Activated CD4-positive, alpha-beta T cell treated with anti-CD3 and anti-CD28 coated beads, Interleukin-2, amount 10 ng/mL, durations not matched to agents 24 days and 14 days (primary cell): ENCODE measurements at regions of chr2 and their contacts with region 1.

Region 1: GRCh38 chr2:30447149-30448045 is at the start of gene LCLAT1:
- DNase-seq: peak; percentile 97
- H3K4me3 Mint-ChIP-seq: peak within 1 kb of the TSS; percentile 85
- H3K27ac Mint-ChIP-seq: peak within 1 kb of the TSS; percentile 97
- H3K4me1 Mint-ChIP-seq: peaks cover 26% of the 10 kb centered on the region
- H3K27me3 Mint-ChIP-seq: no peaks in the 10 kb centered on the region
- total RNA-seq, gene LCLAT1: 31.4 and 34.7 TPM in 2 replicates

Region 2: GRCh38 chr2:30266051-30266621 is 181.3 kb before region 1 on chr2:
- intact Hi-C with region 1: loop called (anchors 1 kb)
- DNase-seq: peak; percentile 86
- H3K4me3 Mint-ChIP-seq: peak overlapping the region; percentile 90
- H3K27ac Mint-ChIP-seq: peak overlapping the region; percentile 99
- H3K4me1 Mint-ChIP-seq: peaks cover 70% of the 10 kb centered on the region
- H3K27me3 Mint-ChIP-seq: no peaks in the 10 kb centered on the region

Region 3: GRCh38 chr2:30398084-30398873 is 49.1 kb before region 1 on chr2:
- intact Hi-C with region 1: no loop called
- DNase-seq: no peak
- H3K4me3 Mint-ChIP-seq: no peak overlapping the region
- H3K27ac Mint-ChIP-seq: no peak overlapping the region
- H3K4me1 Mint-ChIP-seq: no peaks in the 10 kb centered on the region
- H3K27me3 Mint-ChIP-seq: peaks cover 3% of the 10 kb centered on the region

Region 4: GRCh38 chr2:30410217-30410616 is 37.2 kb before region 1 on chr2:
- intact Hi-C with region 1: loop called (anchors 5 kb)
- DNase-seq: peak; percentile 69
- H3K4me3 Mint-ChIP-seq: peak overlapping the region; percentile 0
- H3K27ac Mint-ChIP-seq: peak overlapping the region; percentile 78
- H3K4me1 Mint-ChIP-seq: peaks cover 43% of the 10 kb centered on the region
- H3K27me3 Mint-ChIP-seq: no peaks in the 10 kb centered on the region

Region 5: GRCh38 chr2:30428827-30429461 is 18.5 kb before region 1 on chr2:
- intact Hi-C with region 1: loop called (anchors 1 kb)
- DNase-seq: no peak
- H3K4me3 Mint-ChIP-seq: peak overlapping the region; percentile 39
- H3K27ac Mint-ChIP-seq: peak overlapping the region; percentile 78
- H3K4me1 Mint-ChIP-seq: peaks cover 25% of the 10 kb centered on the region
- H3K27me3 Mint-ChIP-seq: no peaks in the 10 kb centered on the region

Region 6: GRCh38 chr2:30781961-30782533 is 334.6 kb after region 1 on chr2:
- intact Hi-C with region 1: no loop called
- DNase-seq: peak; percentile 27
- H3K4me3 Mint-ChIP-seq: no peak overlapping the region
- H3K27ac Mint-ChIP-seq: no peak overlapping the region
- H3K4me1 Mint-ChIP-seq: no peaks in the 10 kb centered on the region
- H3K27me3 Mint-ChIP-seq: no peaks in the 10 kb centered on the region